AG04449 (cell line): ENCODE measurements at regions of chr5 and their contacts with region 1.

Region 1: GRCh38 chr5:58886315-58887207 is 303.7 kb downstream of the RAB3C start:
- DNase-seq: peak; percentile 12
- H3K4me3 ChIP-seq: no peak overlapping the region
- CTCF ChIP-seq: peak; percentile 88

Region 2: GRCh38 chr5:58871648-58872242 is 14.8 kb before region 1 on chr5:
- CTCF ChIA-PET with region 1: interaction called, 95 read pairs
- POLR2A ChIA-PET with region 1: no interaction called
- DNase-seq: no peak
- H3K4me3 ChIP-seq: no peak overlapping the region
- CTCF ChIP-seq: peak; percentile 61

Region 3: DNA sequence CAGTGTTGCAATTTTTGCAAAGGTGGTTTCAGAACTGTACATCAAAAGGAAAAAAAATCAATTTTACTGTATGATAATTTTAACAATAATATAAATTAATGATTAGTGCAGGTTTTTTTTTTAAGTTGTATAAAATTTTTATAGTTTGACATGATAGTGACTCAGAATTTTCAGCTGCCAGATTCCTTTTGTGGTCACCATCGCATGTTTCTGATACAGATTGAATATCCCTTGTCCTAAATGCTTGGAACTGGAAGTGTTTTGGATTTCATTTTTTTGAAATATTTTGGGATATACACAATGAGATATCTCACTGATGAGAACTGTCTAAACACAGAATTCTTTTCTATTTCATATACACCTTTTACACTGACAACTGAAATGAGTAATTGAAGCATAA is 57.7 kb after region 1 on chr5:
- CTCF ChIA-PET with region 1: interaction called, 15 read pairs
- POLR2A ChIA-PET with region 1: no interaction called
- DNase-seq: no peak
- H3K4me3 ChIP-seq: no peak overlapping the region
- CTCF ChIP-seq: no peak

Region 4: GRCh38 chr5:58961631-58962280 is 75.2 kb after region 1 on chr5:
- CTCF ChIA-PET with region 1: no interaction called
- POLR2A ChIA-PET with region 1: no interaction called
- DNase-seq: no peak
- H3K4me3 ChIP-seq: no peak overlapping the region
- CTCF ChIP-seq: no peak

Region 5: DNA sequence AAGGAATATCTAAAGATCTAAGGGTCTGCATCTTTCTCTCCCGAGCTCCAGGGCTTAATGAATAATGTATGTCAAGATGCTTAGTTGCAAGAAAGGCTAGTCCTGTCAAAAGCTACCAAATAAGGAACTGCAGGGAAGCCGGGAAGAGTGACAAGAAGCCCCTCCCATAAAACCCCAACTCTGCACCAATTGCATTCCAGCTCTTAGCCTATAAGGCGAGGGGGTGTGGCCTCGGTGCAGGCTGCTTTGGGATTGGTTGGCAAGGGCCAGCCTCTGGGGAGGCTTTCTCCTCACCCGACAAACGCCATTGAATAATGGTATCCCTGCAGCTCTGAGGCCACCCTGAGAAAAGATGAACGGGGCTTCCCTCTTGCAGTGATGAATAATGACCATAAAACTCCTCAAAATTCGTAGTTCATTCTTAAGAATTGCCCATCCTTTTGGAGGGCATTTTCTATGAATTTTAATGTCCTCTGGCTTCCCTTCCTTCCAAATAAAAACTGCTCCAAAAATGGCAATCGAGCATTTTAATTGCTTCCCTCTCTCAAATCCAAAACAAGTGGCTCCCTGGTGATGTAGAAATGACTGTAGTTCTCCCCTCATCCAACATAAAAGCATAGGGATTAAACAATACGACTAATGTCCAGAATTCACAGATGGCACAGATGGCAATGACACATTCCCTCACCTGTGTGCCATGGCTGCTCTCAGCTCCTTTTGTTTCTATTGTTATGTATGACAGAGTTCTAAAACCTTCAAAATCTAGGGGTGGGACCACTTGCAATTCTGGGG is 113.4 kb after region 1 on chr5:
- CTCF ChIA-PET with region 1: interaction called, 147 read pairs
- POLR2A ChIA-PET with region 1: no interaction called
- DNase-seq: no peak
- H3K4me3 ChIP-seq: no peak overlapping the region
- CTCF ChIP-seq: no peak

Region 6: GRCh38 chr5:59164041-59164830 is 277.7 kb after region 1 on chr5:
- CTCF ChIA-PET with region 1: interaction called, 18 read pairs
- POLR2A ChIA-PET with region 1: no interaction called
- DNase-seq: peak; percentile 16
- H3K4me3 ChIP-seq: no peak overlapping the region
- CTCF ChIP-seq: no peak

Region 7: GRCh38 chr5:59180515-59180914 is 294.0 kb after region 1 on chr5:
- CTCF ChIA-PET with region 1: interaction called, 193 read pairs
- POLR2A ChIA-PET with region 1: no interaction called
- DNase-seq: no peak
- H3K4me3 ChIP-seq: no peak overlapping the region
- CTCF ChIP-seq: no peak

Region 8: GRCh38 chr5:59449905-59450644 is 563.5 kb after region 1 on chr5:
- CTCF ChIA-PET with region 1: no interaction called
- POLR2A ChIA-PET with region 1: no interaction called
- DNase-seq: no peak
- H3K4me3 ChIP-seq: no peak overlapping the region
- CTCF ChIP-seq: no peak